K562 (cell line): ENCODE measurements at regions of chr12 and their contacts with region 1.

Region 1: DNA sequence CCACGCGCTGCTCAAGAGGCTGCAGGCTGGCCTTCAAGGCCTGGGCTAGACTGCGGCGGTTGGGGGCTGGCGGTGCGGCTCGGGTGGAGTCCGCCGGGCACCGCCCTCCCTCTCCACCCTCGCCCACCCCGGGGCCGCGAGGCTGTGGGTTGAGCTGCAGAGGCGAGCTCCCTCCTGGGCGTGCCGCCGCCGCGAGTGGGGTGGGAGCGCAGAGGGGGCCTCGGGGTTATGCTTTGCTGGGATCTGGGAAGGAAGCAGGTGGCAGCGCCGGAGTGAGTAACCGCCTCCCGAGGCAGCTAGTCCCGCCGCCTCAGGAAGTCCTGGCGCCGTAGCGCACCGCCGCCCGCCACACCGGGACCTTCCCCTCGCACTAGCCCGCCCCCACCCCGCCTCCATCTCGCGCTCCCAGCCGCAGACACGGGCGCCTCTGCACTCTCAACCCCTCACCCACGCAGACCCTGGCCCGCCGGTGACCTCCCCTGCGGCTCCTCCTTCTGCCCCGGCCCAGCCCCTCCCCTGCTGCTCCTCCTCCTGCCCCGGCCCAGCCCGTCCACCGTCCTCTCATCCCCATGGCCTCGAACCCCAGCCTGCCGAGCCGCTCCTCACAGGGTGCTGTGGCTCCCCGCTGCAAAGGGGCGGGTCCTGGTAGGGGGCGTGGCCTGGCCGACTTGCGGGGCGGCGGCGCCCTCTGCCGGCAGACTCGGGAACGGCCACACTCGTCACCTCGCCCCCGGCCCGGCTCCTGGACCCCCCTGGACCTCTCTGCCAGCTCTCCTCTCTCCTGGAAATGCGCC is 16.6 kb downstream of the TAMALIN start:
- DNase-seq: peak; percentile 88 to 94 (median 91)
- ATAC-seq: peak; percentile 84
- H3K4me3 ChIP-seq: peak overlapping the region; percentile 45
- H3K27ac ChIP-seq: no peak overlapping the region
- H3K4me1 ChIP-seq: peaks cover 0 to 27% of the 10 kb centered on the region in 2 experiments; a peak in 3 of 5 replicates
- H3K27me3 ChIP-seq: peaks cover 0 to 13% of the 10 kb centered on the region in 2 experiments; a peak in 2 of 5 replicates
- CTCF ChIP-seq: peak; percentile 89 to 95 (median 91)
- EP300 ChIP-seq: no peak
- POLR2A ChIP-seq: no peak
- RAD21 ChIP-seq: peak; percentile 95 to 96

Region 2: GRCh38 chr12:51994959-51995358 is 28.4 kb before region 1 on chr12:
- CTCF ChIA-PET with region 1: interaction called, 9 read pairs
- POLR2A ChIA-PET with region 1: no interaction called
- in situ Hi-C with region 1: no loop called
- intact Hi-C with region 1: loop called (anchors 1 kb)
- DNase-seq: no peak
- ATAC-seq: no peak
- H3K4me3 ChIP-seq: no peak overlapping the region
- H3K27ac ChIP-seq: no peak overlapping the region
- H3K4me1 ChIP-seq: peaks cover 0 to 10% of the 10 kb centered on the region in 2 experiments; a peak in 1 of 5 replicates
- H3K27me3 ChIP-seq: no peaks in the 10 kb centered on the region
- CTCF ChIP-seq: no peak
- EP300 ChIP-seq: no peak
- POLR2A ChIP-seq: no peak
- RAD21 ChIP-seq: no peak

Region 3: GRCh38 chr12:52010152-52010622 is 13.2 kb before region 1 on chr12:
- CTCF ChIA-PET with region 1: interaction called, 63 read pairs
- POLR2A ChIA-PET with region 1: interaction called, 13 read pairs
- in situ Hi-C with region 1: no loop called
- intact Hi-C with region 1: no loop called
- DNase-seq: peak; percentile 89 to 93 (median 91)
- ATAC-seq: peak; percentile 98
- H3K4me3 ChIP-seq: 0 out of 2 replicates have a peak overlapping the region, but pooled peaks have one; percentile 17
- H3K27ac ChIP-seq: peak overlapping the region; percentile 36
- H3K4me1 ChIP-seq: peaks cover 20 to 42% of the 10 kb centered on the region in 2 experiments
- H3K27me3 ChIP-seq: no peaks in the 10 kb centered on the region
- CTCF ChIP-seq: 0 out of 6 replicates have a peak, but pooled peaks of 1 of the 3 experiments have one; percentile 1
- EP300 ChIP-seq: no peak
- POLR2A ChIP-seq: 0 out of 2 replicates have a peak, but pooled peaks have one; percentile 49
- RAD21 ChIP-seq: no peak

Region 4: DNA sequence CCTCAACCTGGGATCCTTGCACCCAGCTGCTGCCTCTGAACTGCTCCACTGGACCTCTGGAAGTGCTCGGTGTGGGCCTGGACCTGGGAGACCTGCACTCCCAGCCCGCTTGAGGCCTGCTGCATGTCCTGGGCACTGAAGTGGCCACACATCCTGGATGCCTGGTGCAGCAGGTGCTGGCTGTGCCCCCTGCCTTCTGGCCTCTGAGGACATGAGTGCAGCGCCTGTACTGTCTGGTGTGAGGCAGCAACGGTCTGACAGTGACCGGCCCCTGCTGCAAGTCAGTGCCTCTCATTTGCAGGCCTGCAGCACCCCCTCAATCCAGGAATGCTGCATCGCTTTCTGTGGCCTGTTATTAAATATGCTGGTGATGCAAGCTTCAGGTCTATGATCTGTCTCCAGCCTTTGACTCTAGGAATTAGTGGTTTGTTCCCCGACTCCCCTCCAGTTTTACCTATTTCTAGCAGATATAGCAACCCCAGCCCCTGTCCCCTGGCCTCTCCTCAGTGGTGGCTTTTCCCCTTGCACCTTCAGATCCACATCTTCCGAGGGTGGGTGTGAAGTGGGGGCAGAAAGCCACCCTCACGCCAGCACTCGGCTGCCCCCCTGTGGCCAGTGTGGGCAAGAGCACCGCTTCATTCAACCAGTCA is 59.7 kb after region 1 on chr12:
- CTCF ChIA-PET with region 1: interaction called, 242 read pairs
- POLR2A ChIA-PET with region 1: interaction called, 6 read pairs
- in situ Hi-C with region 1: loop called (anchors 5 kb)
- intact Hi-C with region 1: loop called (anchors 1 kb)
- DNase-seq: peak; percentile 76 to 87 (median 86)
- ATAC-seq: peak; percentile 89
- H3K4me3 ChIP-seq: no peak overlapping the region
- H3K27ac ChIP-seq: no peak overlapping the region
- H3K4me1 ChIP-seq: peaks cover 0 to 10% of the 10 kb centered on the region in 2 experiments; a peak in 1 of 5 replicates
- H3K27me3 ChIP-seq: peaks cover 28 to 37% of the 10 kb centered on the region in 2 experiments; a peak in 4 of 5 replicates
- CTCF ChIP-seq: peak; percentile 94 to 98 (median 95)
- EP300 ChIP-seq: no peak
- POLR2A ChIP-seq: no peak
- RAD21 ChIP-seq: peak; percentile 92 to 96

Region 5: DNA sequence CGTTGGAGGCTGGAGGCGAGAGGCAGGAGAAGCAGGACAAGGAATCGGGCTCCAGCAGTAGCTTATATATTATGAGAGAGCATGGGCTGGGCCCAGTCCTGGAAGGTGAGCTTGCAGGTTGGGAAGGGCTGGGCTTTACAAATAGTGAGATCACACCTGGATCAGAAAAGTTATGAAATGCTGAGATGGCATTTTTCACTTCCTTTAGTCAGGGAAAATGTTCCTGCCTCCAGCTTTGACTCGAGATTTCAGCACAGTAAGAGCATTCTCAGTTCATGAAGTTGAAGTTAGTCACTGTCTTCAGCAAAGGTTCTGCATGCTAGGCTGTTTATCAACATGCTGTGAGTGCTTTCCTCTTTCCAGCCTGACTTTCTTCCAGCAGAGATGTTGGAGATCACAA is 450.4 kb after region 1 on chr12 and contains the start of gene KRT6C:
- CTCF ChIA-PET with region 1: no interaction called
- POLR2A ChIA-PET with region 1: no interaction called
- in situ Hi-C with region 1: no loop called
- intact Hi-C with region 1: no loop called
- DNase-seq: no peak
- ATAC-seq: no peak
- H3K4me3 ChIP-seq: no peak within 1 kb of the TSS
- H3K27ac ChIP-seq: no peak within 1 kb of the TSS
- H3K4me1 ChIP-seq: no peaks in the 10 kb centered on the region
- H3K27me3 ChIP-seq: peaks cover 5% of the 10 kb centered on the region in 2 experiments; a peak in 3 of 5 replicates
- CTCF ChIP-seq: no peak
- EP300 ChIP-seq: no peak
- POLR2A ChIP-seq: no peak
- RAD21 ChIP-seq: no peak
- polyA plus RNA-seq, gene KRT6C: not detected